Activated naive CD4-positive, alpha-beta T cell treated with anti-CD3 and anti-CD28 coated beads, Interleukin-2, amount 10 ng/mL, durations not matched to agents 7 days and 5 days (primary cell): ENCODE measurements at regions of chr1 and their contacts with region 1.

Region 1: GRCh38 chr1:25895365-25895993 is 10.7 kb downstream of the STMN1 start:
- DNase-seq: peak; percentile 93
- H3K4me3 Mint-ChIP-seq: no peak overlapping the region
- H3K27ac Mint-ChIP-seq: peak overlapping the region; percentile 46
- H3K4me1 Mint-ChIP-seq: peaks cover 28% of the 10 kb centered on the region
- H3K27me3 Mint-ChIP-seq: no peaks in the 10 kb centered on the region

Region 2: GRCh38 chr1:25523542-25523941 is 371.9 kb before region 1 on chr1:
- CTCF ChIA-PET with region 1: no interaction called
- DNase-seq: peak; percentile 44
- H3K4me3 Mint-ChIP-seq: no peak overlapping the region
- H3K27ac Mint-ChIP-seq: no peak overlapping the region
- H3K4me1 Mint-ChIP-seq: peaks cover 8% of the 10 kb centered on the region
- H3K27me3 Mint-ChIP-seq: peaks cover 29% of the 10 kb centered on the region

Region 3: DNA sequence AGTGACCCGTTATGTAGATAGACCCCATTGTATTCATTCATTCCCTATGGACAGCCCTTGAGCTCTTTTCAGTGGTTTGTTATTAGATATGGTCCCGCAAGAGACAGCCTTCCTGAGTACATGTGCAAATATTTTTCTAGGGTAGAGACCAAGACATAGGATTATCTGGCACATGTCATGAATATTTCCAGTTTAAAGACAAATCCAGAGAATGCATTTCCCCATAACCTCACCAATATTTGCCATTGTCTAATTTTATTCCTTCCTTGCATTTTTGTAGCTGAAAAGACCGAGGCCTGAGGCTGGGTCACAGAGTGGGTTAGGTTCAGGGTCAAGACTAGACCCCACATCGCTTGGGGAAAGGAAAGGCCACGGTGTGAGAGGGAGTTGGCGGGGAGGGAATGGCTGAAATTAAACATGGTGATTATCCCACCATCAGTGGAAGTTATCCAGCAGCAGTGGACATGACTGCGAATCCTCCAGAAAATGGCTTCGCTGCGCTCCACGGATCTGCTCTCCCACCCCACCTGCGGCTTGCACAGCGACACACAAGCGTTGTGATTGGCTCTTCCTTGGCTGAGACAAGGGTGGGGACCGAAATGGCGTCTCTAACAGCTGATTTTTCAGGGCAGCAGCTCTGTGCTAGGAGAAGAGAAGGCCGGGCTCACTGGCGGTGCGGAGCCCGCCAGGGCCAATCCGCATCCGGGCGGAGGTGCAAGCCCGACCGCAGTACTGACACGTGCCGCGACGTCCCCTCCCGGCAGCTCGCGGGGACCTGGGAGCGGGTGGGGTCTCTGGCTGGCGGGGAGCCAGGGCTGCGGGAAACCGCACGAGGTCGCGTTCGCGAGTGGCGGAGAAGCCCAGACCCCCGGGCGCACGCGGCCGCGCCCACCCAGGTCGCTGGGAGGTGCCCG is 26.8 kb after region 1 on chr1:
- CTCF ChIA-PET with region 1: interaction called, 12 read pairs
- DNase-seq: peak; percentile 76
- H3K4me3 Mint-ChIP-seq: peak overlapping the region; percentile 76
- H3K27ac Mint-ChIP-seq: peak overlapping the region; percentile 78
- H3K4me1 Mint-ChIP-seq: peaks cover 44% of the 10 kb centered on the region
- H3K27me3 Mint-ChIP-seq: peaks cover 62% of the 10 kb centered on the region

Region 4: DNA sequence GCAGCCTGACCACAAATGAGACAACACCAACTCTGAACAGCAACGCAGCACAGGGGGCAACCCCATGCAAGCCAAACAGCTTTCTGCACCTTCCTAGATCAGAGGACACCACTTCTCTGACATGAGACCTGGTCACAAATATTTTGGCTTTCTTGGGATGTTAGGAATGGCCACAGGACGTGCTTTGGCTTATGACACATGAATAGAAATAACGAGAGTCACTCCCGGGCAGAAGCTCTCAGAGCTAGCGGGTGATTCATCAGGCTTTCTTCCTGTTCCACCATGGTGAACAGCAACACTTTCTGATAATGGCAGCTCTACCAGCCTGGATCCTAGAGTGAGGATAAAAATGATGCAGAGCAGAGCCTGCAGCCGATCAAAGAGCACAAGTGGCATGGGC is 63.0 kb after region 1 on chr1:
- CTCF ChIA-PET with region 1: no interaction called
- DNase-seq: no peak
- H3K4me3 Mint-ChIP-seq: no peak overlapping the region
- H3K27ac Mint-ChIP-seq: no peak overlapping the region
- H3K4me1 Mint-ChIP-seq: peaks cover 4% of the 10 kb centered on the region
- H3K27me3 Mint-ChIP-seq: no peaks in the 10 kb centered on the region

Region 5: DNA sequence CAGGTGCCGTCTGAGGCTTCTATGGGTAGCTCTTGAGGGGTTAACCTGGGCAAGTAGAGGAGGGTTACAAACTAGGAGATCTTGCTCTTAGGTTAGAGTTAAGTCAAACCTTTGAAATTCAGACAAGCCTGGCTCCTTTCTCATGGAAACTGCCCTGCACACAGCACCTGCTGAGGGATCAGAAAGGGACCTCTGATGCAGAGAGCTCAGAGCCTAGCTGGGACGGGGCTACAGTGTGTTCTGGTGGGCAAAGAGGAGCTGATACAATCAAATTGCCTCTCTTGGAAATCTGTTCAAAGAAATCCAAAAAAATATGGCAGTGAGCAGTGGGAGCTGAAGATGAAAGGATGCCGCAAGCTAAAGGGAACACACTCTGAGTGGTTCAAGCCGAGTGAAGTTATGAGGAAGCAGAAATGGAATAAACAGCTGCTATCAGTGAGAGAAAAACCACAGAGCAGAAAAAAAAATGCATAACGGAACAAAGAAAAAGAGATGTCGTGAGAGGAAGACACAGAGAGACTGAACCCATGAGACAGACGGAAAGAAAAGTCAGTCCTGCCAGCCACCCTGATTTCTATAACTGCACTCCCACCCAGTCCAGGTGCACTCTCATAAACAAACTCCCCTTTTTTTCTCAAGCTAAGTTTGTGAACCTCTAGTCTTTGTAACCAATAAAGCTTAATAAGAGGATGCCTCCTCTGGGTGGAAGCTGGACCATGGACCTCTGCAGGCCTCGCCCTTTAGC is 75.8 kb after region 1 on chr1:
- CTCF ChIA-PET with region 1: interaction called, 12 read pairs
- DNase-seq: peak; percentile 48
- H3K4me3 Mint-ChIP-seq: peak overlapping the region; percentile 6
- H3K27ac Mint-ChIP-seq: peak overlapping the region; percentile 87
- H3K4me1 Mint-ChIP-seq: peaks cover 34% of the 10 kb centered on the region
- H3K27me3 Mint-ChIP-seq: no peaks in the 10 kb centered on the region

Region 6: GRCh38 chr1:25990702-25991395 is 95.4 kb after region 1 on chr1:
- CTCF ChIA-PET with region 1: interaction called, 213 read pairs
- DNase-seq: peak; percentile 66
- H3K4me3 Mint-ChIP-seq: peak overlapping the region; percentile 78
- H3K27ac Mint-ChIP-seq: peak overlapping the region; percentile 87
- H3K4me1 Mint-ChIP-seq: peaks cover 66% of the 10 kb centered on the region
- H3K27me3 Mint-ChIP-seq: no peaks in the 10 kb centered on the region

Region 7: DNA sequence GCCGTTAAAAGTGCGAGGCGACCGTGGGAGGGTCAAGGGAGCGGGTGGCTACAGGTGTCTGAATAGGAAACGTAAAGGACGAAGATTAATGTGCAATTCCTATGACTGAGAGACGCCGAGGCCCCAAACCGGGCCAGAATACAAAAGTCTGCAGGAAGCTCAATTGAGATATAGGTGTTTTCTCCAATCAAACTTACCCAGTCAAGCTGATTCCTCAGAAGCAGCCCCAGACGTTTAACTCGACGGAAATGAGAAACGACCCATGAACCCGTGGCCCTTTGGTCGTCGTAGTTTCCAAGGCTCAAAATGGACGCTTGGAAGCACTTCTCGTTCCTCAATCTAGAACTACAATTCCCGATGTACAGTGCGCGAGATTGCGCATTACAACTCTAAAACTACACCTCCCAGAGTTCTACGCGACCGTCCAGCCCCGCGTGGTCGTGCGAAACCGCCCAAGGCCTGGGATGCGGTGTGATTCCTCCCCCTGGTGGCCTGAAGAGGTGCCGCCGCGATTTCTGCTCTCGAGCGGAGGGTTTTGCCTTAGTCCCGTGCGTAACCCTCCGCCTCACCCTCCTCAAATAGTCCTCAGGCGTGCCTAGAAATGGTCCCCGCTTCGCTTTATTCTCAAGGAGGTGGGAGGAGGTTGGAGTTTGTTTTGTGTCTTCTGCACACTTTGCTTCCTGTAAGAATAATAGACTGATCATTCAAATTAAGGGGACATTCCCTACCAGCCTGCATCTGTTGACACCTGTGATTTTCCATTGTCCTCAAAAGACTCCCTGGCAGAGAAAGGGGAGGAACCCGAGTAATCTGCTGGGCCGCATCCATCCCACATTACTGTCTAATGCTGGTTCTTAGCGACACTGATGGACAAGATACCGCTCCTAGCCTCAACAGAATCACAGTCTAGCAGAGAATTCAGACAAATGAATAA is 102.6 kb after region 1 on chr1 and contains the start of gene PAFAH2:
- CTCF ChIA-PET with region 1: interaction called, 213 read pairs
- DNase-seq: peak; percentile 98
- H3K4me3 Mint-ChIP-seq: peak within 1 kb of the TSS; percentile 96
- H3K27ac Mint-ChIP-seq: peak within 1 kb of the TSS; percentile 98
- H3K4me1 Mint-ChIP-seq: peaks cover 33% of the 10 kb centered on the region
- H3K27me3 Mint-ChIP-seq: peaks cover 13% of the 10 kb centered on the region